ENCODE measurements at regions of chr1 and their contacts with region 1.

Region 1: DNA sequence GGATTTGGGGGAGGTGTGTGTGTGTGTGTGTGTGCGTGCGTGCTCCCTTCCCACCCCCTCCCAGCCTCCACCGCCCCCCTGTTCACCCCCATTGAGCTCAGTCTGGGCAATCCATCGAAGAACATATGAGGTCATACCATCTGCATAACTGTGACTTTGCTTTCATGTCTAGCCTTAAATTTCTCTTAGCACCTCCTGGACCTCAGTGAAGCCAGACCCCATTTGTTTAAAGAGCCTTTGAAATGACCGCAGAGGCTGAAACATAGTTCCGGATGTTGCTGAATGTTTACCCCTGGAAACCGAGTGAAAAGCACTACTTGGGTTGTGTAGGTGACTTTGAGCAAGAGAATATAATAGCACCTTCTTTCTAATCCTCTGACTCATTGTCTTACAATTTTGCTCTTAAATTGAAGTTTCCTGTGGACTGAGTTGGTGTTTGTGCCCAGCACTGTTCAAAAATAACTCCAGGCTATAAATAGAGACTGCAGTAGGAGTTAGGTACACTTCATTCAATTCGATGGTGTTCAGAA is 75.4 kb downstream of the UBE4B start:
- DNase-seq: no peak
- ATAC-seq: peak; percentile 83
- H3K4me3 ChIP-seq: peak overlapping the region in 1 of 2 donors; percentile 19
- H3K27ac ChIP-seq: peak overlapping the region; percentile 91 to 97
- H3K4me1 ChIP-seq: peaks cover 0 to 7% of the 10 kb centered on the region in 2 donors
- H3K27me3 ChIP-seq: no peaks in the 10 kb centered on the region

Region 2: GRCh38 chr1:10022656-10023055 is 85.5 kb before region 1 on chr1:
- intact Hi-C with region 1: no loop called
- DNase-seq: no peak
- ATAC-seq: no peak
- H3K4me3 ChIP-seq: no peak overlapping the region
- H3K27ac ChIP-seq: no peak overlapping the region
- H3K4me1 ChIP-seq: no peaks in the 10 kb centered on the region
- H3K27me3 ChIP-seq: no peaks in the 10 kb centered on the region

Region 3: GRCh38 chr1:10057343-10057742 is 50.9 kb before region 1 on chr1:
- intact Hi-C with region 1: loop called in 1 of 2 experiments (anchors 5 kb)
- DNase-seq: peak; percentile 67 to 81
- ATAC-seq: peak; percentile 74
- H3K4me3 ChIP-seq: no peak overlapping the region
- H3K27ac ChIP-seq: no peak overlapping the region
- H3K4me1 ChIP-seq: no peaks in the 10 kb centered on the region
- H3K27me3 ChIP-seq: no peaks in the 10 kb centered on the region

Region 4: GRCh38 chr1:10065344-10065685 is 42.9 kb before region 1 on chr1:
- intact Hi-C with region 1: loop called in 1 of 2 experiments (anchors 5 kb)
- DNase-seq: peak in 1 of 2 donors; percentile 30
- ATAC-seq: no peak
- H3K4me3 ChIP-seq: no peak overlapping the region
- H3K27ac ChIP-seq: peak overlapping the region in 1 of 2 donors; percentile 23
- H3K4me1 ChIP-seq: peaks cover 0 to 5% of the 10 kb centered on the region in 2 donors
- H3K27me3 ChIP-seq: no peaks in the 10 kb centered on the region

Region 5: GRCh38 chr1:10128101-10128765 is 20.0 kb after region 1 on chr1:
- intact Hi-C with region 1: loop called in 1 of 2 experiments (anchors 1 kb)
- DNase-seq: no peak
- ATAC-seq: no peak
- H3K4me3 ChIP-seq: no peak overlapping the region
- H3K27ac ChIP-seq: peak overlapping the region; percentile 26 to 79
- H3K4me1 ChIP-seq: peaks cover 0 to 4% of the 10 kb centered on the region in 2 donors
- H3K27me3 ChIP-seq: no peaks in the 10 kb centered on the region

Region 6: GRCh38 chr1:10152709-10153284 is 44.6 kb after region 1 on chr1:
- intact Hi-C with region 1: loop called in 1 of 2 experiments (anchors 5 kb)
- DNase-seq: peak; percentile 70 to 83
- ATAC-seq: peak; percentile 80
- H3K4me3 ChIP-seq: no peak overlapping the region
- H3K27ac ChIP-seq: peak overlapping the region in 1 of 2 donors; percentile 11
- H3K4me1 ChIP-seq: no peaks in the 10 kb centered on the region
- H3K27me3 ChIP-seq: no peaks in the 10 kb centered on the region

Region 7: DNA sequence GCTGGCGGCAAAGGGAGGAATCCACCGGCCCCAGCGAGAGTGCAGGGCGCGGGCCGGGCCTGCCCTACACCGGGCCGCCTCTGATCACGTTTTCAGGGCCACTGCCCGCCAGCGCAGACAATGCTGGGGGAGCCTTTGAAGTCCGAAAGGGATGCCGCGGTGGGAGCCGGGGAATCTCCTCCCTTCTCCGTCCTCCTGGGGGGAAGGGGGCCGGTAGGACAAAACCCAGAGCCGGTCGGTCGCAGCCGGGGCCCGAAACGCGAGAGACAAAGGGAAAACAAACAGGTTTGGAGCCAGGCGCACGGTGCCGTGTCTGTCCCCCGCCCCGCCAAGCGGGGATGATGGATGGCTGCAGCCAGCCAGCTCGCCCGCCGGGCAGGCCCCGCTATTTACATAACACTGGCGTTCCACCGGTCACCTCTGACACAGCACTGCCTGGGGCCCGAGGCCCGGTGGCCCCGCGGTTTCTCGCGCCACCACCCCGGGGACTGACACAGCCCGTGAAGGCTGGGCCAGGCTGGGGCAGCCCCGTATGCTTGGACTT is 596.2 kb after region 1 on chr1:
- intact Hi-C with region 1: no loop called
- DNase-seq: no peak
- ATAC-seq: no peak
- H3K4me3 ChIP-seq: no peak overlapping the region
- H3K27ac ChIP-seq: no peak overlapping the region
- H3K4me1 ChIP-seq: no peaks in the 10 kb centered on the region
- H3K27me3 ChIP-seq: no peaks in the 10 kb centered on the region

Measured in aorta (tissue), 5 donors.